ENCODE measurements at regions of chr2 and their contacts with region 1.

Region 1: DNA sequence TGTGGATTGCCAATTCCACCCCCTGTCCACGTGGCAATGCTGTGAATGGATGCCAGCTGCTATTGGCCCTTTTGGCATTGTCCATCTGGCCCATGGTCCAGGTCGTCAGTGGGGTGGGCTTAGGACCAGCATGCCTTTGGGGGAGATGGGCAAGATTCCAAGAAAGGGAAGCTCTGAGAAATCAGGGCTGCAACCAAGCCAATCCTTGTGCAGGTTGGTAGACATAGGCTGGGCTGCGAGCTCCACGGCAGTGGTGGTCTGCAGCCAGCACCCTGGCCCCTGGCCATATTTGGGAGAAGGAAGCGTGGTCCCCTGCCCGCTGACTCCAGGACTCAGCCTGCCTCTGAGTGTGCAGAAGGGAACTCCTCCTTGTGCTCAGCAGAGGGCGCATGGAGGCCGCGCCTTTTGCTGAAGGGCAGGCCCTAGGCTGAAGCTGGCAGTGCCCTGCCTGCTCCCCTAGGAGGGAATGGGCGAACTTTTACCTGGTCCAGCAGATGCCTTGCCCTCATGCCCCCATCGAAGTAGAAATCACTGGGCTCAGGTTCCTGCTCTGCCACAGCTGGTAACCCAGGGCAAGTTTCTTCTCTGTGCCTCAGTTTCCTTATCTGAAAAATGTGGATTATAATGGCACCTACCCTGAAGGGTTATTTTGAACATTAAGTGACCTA is 5.4 kb downstream of the SPR start:
- DNase-seq: no peak
- H3K4me3 ChIP-seq: no peak overlapping the region
- H3K27ac ChIP-seq: no peak overlapping the region
- H3K4me1 ChIP-seq: peaks cover 11 to 45% (median 20%) of the 10 kb centered on the region in 3 donors
- H3K27me3 ChIP-seq: peaks cover 0 to 40% (median 0%) of the 10 kb centered on the region in 4 donors
- CTCF ChIP-seq: peak in 5 of 6 experiments; percentile 54 to 78 (median 59)
- POLR2A ChIP-seq: no peak

Region 2: GRCh38 chr2:72494392-72494791 is 398.2 kb before region 1 on chr2:
- intact Hi-C with region 1: no loop called
- DNase-seq: no peak
- H3K4me3 ChIP-seq: no peak overlapping the region
- H3K27ac ChIP-seq: no peak overlapping the region
- H3K4me1 ChIP-seq: no peaks in the 10 kb centered on the region
- H3K27me3 ChIP-seq: no peaks in the 10 kb centered on the region
- CTCF ChIP-seq: no peak
- POLR2A ChIP-seq: no peak

Region 3: GRCh38 chr2:72788756-72789155 is 103.9 kb before region 1 on chr2:
- intact Hi-C with region 1: no loop called
- DNase-seq: no peak
- H3K4me3 ChIP-seq: no peak overlapping the region
- H3K27ac ChIP-seq: peak overlapping the region in 2 of 4 donors; percentile 16 to 31
- H3K4me1 ChIP-seq: peaks cover 11 to 15% (median 12%) of the 10 kb centered on the region in 3 donors
- H3K27me3 ChIP-seq: no peaks in the 10 kb centered on the region
- CTCF ChIP-seq: no peak
- POLR2A ChIP-seq: no peak

Region 4: DNA sequence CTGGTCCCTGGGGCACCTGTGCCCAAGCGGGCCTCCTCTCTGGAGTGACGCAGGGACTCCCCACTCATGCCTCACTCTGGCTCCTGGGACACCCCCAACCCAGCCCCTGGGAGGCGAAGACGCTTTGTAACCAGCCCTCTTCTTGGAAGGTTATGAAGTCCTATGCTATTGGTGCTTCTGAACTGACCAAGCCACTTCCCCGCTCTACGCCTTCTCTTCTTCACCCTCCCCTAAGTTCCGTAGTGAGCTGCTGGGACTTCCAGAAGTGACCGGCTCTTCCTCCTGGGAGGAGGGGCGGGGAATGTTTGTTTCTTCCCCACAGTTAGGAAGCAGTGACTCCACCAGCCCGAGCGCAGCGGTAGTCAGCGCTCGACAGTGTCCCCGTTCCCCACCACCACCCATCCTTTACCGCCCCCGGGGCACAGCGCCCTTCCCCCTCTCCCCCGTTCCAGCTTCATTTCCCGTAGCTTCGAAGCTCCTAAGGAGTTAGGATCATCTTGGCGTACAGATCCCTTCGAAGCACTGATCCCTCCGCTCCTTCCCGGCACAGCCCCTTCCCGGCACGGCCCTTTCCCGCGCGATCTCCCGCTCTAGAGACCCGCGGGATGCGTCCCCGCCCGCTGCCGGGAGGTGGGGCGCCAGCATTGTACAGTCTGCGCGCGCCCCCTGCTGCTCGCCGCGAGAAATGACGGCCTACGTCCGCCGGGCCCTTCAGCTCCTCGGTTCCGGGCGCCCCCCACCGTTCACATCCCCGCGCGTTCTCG is 284.4 kb after region 1 on chr2:
- intact Hi-C with region 1: loop called (anchors 10 kb)
- DNase-seq: peak; percentile 36
- H3K4me3 ChIP-seq: peak overlapping the region; percentile 29 to 73 (median 58)
- H3K27ac ChIP-seq: peak overlapping the region; percentile 35 to 90 (median 81)
- H3K4me1 ChIP-seq: peaks cover 17 to 32% (median 21%) of the 10 kb centered on the region in 3 donors
- H3K27me3 ChIP-seq: peaks cover 0 to 81% (median 2%) of the 10 kb centered on the region in 4 donors
- CTCF ChIP-seq: peak; percentile 94 to 98 (median 97)
- POLR2A ChIP-seq: no peak